Activated CD4-positive, alpha-beta memory T cell treated with anti-CD3 and anti-CD28 coated beads, Interleukin-2, amount 10 ng/mL, durations not matched to agents 7 days and 5 days (primary cell): ENCODE measurements at regions of chr2 and their contacts with region 1.

Region 1: DNA sequence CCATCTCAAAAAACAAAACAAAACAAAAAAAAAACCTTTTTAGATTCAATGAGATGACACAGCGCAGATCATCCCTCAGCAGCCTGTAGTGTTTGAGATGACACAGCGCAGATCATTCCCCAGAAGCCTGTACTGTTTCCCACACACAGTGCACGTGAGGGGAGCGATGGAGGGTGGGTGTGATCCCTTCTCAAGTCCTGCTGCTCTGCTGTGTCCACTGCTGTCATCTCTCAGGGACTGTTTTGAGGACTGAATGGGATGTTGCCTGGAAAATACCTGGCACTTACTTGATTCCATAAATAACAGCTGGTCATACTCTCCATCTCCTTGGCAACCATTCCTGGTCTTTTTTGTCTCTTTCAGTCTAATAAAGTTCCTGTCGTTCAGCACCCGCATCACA is 25.7 kb downstream of the TGOLN2 start:
- DNase-seq: no peak
- H3K4me3 Mint-ChIP-seq: no peak overlapping the region
- H3K27ac Mint-ChIP-seq: no peak overlapping the region
- H3K4me1 Mint-ChIP-seq: peaks cover 5% of the 10 kb centered on the region
- H3K27me3 Mint-ChIP-seq: peaks cover 12% of the 10 kb centered on the region

Region 2: DNA sequence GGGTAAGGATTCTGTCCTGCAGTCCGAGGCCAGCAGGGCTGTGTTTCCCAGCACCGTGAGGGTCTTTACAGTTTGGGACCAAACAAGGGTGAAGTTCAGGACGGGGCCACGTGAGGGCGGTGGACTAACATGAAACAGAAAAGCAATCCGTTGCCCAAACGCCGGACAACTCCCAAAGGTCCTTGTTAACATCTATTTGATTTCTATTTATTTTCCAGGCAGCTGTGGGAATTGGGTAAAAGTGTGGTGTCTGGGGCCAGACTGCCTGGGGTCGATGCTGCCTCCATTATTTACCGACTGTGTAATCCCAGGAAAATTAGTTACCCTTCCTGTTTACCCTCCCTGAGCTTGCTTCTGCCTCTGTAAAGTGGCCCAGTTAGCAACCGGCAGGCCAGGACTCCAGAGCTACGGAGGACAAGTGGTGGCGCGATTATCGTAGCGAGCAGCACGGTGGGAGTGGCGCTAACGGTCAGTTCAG is 235.2 kb before region 1 on chr2:
- CTCF ChIA-PET with region 1: interaction called, 24 read pairs
- POLR2A ChIA-PET with region 1: no interaction called
- DNase-seq: peak; percentile 45
- H3K4me3 Mint-ChIP-seq: no peak overlapping the region
- H3K27ac Mint-ChIP-seq: no peak overlapping the region
- H3K4me1 Mint-ChIP-seq: peaks cover 2% of the 10 kb centered on the region
- H3K27me3 Mint-ChIP-seq: peaks cover 32% of the 10 kb centered on the region

Region 3: GRCh38 chr2:85266146-85267041 is 35.7 kb before region 1 on chr2:
- CTCF ChIA-PET with region 1: interaction called, 53 read pairs
- POLR2A ChIA-PET with region 1: no interaction called
- DNase-seq: peak; percentile 73
- H3K4me3 Mint-ChIP-seq: no peak overlapping the region
- H3K27ac Mint-ChIP-seq: no peak overlapping the region
- H3K4me1 Mint-ChIP-seq: peaks cover 3% of the 10 kb centered on the region
- H3K27me3 Mint-ChIP-seq: peaks cover 19% of the 10 kb centered on the region

Region 4: GRCh38 chr2:85282914-85283313 is 19.2 kb before region 1 on chr2:
- CTCF ChIA-PET with region 1: interaction called, 30 read pairs
- POLR2A ChIA-PET with region 1: no interaction called
- DNase-seq: no peak
- H3K4me3 Mint-ChIP-seq: no peak overlapping the region
- H3K27ac Mint-ChIP-seq: no peak overlapping the region
- H3K4me1 Mint-ChIP-seq: peaks cover 10% of the 10 kb centered on the region
- H3K27me3 Mint-ChIP-seq: peaks cover 8% of the 10 kb centered on the region

Region 5: DNA sequence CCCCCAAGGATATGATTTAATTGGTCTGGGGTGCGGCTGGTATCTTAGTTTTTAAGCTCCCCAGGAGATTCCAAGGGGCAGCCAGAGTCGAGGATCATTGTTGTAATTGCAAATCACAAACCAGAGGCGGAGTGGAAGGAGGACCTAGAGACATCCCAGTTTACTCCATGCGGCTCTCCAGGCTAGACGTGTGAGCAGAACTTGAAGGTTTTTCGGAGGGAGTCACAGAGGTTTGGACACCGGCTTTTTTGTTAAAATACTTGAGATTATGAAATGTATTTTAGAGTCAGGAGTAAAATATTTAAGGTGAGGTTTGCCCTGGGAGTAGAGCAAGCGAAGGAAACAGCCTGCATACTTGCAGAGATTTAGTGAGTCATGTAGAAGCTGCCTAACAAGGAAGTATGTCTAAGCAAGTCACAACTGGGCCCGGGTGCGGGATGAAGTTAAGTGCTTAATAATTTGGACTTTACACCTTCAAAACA is 13.8 kb before region 1 on chr2:
- CTCF ChIA-PET with region 1: interaction called, 30 read pairs
- POLR2A ChIA-PET with region 1: interaction called, 3 read pairs
- DNase-seq: no peak
- H3K4me3 Mint-ChIP-seq: no peak overlapping the region
- H3K27ac Mint-ChIP-seq: no peak overlapping the region
- H3K4me1 Mint-ChIP-seq: peaks cover 28% of the 10 kb centered on the region
- H3K27me3 Mint-ChIP-seq: no peaks in the 10 kb centered on the region

Region 6: DNA sequence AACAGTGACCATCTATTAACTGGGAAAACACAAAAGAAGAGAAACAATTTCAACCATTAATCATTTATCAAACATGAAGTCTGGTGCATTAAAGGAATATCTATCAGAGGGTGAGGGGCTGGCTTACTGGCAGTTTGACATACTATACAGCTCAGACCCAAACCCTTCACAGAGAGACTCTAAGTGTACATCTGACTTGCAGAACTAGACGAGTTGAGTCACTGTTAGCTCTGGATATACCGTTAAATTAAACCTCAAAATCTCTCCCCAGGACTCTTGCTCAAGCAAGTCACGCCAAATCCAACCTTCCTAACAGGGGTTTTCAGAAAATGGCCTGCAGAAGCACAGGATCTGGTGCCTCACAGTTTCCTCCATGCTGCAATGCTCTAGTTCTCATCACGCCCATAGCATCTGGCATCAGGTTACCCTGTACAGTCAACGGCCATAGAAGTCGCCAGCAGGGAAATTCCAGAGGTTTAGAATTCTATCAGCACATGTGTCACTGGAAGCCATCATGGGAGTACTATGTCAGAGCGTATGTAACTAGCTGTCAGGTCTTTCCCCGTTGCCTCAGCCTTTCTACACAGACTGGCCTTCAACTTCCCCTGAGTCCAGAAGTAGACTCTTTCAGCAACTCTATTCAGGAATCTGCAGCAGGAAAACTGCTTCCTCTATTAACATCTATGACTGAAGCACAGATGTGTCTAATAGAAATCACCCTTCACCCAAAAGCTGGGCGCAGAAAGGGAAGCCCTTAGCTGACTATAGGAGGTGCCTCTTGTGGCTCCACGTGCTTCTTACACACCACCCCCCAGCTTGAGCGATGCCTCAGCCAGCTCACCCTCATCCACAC is 16.3 kb after region 1 on chr2:
- CTCF ChIA-PET with region 1: interaction called, 26 read pairs
- POLR2A ChIA-PET with region 1: interaction called, 42 read pairs
- DNase-seq: no peak
- H3K4me3 Mint-ChIP-seq: peak overlapping the region; percentile 2
- H3K27ac Mint-ChIP-seq: peak overlapping the region; percentile 52
- H3K4me1 Mint-ChIP-seq: peaks cover 56% of the 10 kb centered on the region
- H3K27me3 Mint-ChIP-seq: no peaks in the 10 kb centered on the region

Region 7: DNA sequence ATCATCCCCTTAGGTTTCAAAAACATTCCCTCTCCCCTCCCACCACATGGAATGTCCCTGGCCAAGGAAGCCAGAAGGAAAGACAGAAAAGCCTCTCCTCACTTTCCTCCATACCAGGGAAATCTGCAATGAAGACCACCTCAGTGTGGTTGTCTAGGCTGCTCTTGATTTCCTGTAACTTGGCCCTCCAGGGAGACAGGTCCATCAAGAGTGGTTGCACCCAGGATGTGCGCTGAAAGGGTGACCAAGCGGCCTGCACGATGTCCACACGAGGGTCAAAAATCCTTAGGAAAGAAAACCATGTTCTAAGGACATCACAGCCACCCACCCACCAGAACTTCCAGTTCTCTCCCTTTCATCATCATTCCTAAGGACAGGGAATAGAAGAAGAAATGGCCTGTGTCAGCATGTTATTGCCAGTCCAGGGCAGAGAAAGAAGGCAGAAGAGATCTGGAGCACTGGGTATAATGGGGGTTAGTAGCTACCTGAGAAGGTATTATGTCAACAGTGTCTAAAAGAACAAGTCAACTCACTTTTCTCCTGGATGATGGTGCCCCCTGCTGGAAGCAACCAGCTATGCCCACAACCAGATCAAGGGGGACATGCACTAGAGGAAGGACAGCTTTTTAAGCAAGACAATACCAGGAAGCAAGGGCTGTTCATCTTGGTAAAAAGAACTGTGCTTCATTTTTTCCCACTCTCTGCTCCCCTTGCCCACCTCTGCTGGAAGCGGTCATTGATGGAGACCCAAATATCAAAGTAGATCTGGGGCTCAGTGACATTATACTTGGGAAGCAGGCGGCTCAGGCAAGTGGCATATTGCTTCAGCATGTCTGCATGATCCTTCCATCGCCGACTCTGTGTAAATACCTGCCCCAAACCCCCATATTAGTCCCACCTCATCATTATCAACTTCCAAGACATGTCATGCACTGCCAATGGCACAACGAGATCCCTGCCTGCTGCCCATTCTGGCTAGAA is 249.9 kb after region 1 on chr2:
- CTCF ChIA-PET with region 1: interaction called, 13 read pairs
- POLR2A ChIA-PET with region 1: no interaction called
- DNase-seq: peak; percentile 91
- H3K4me3 Mint-ChIP-seq: no peak overlapping the region
- H3K27ac Mint-ChIP-seq: peak overlapping the region; percentile 7
- H3K4me1 Mint-ChIP-seq: peaks cover 5% of the 10 kb centered on the region
- H3K27me3 Mint-ChIP-seq: no peaks in the 10 kb centered on the region